Vagina (tissue), 2 donors: ENCODE measurements at regions of chr9 and their contacts with region 1.

Region 1: GRCh38 chr9:129482521-129483414 is 138.1 kb downstream of the C9orf50 start:
- DNase-seq: no peak
- H3K4me3 ChIP-seq: peak overlapping the region; percentile 54 to 75
- H3K27ac ChIP-seq: peak overlapping the region; percentile 99
- H3K4me1 ChIP-seq: peaks cover 90% of the 10 kb centered on the region
- H3K27me3 ChIP-seq: no peaks in the 10 kb centered on the region
- CTCF ChIP-seq: no peak
- POLR2A ChIP-seq: peak in 1 of 2 donors; percentile 16

Region 2: DNA sequence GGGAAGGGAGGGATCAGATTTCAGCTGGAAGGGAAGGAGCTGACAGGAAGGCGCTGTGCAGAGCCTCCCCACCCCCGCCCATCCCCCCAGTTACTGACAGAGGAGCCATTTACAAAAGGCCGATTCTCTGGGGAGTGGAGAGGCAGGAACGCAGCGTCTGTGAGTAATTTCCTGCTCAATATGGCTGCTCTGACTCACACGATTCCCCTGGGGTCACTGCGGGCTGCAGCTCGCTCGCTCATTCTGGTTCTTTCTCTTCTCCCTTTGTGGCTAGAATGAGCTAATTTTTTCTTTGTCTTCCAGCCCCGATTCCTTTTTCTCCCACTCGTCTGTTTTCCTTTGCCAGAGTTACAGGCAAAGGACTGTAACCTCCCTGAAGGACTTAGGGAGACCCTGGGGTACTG is 342.8 kb before region 1 on chr9:
- intact Hi-C with region 1: loop called (anchors 2 kb)
- DNase-seq: peak; percentile 96 to 99
- H3K4me3 ChIP-seq: peak overlapping the region; percentile 47 to 53
- H3K27ac ChIP-seq: peak overlapping the region; percentile 100
- H3K4me1 ChIP-seq: peaks cover 78% of the 10 kb centered on the region
- H3K27me3 ChIP-seq: no peaks in the 10 kb centered on the region
- CTCF ChIP-seq: no peak
- POLR2A ChIP-seq: peak in 1 of 2 donors; percentile 35

Region 3: GRCh38 chr9:129177791-129178559 is 304.8 kb before region 1 on chr9 and contains the start of gene IER5L:
- intact Hi-C with region 1: loop called (anchors 5 kb)
- DNase-seq: peak in 1 of 2 donors; percentile 97
- H3K4me3 ChIP-seq: peak within 1 kb of the TSS; percentile 77 to 99
- H3K27ac ChIP-seq: peak within 1 kb of the TSS; percentile 99
- H3K4me1 ChIP-seq: peaks cover 29% of the 10 kb centered on the region
- H3K27me3 ChIP-seq: no peaks in the 10 kb centered on the region
- CTCF ChIP-seq: no peak
- POLR2A ChIP-seq: peak in 1 of 2 donors; percentile 97
- total RNA-seq, gene IER5L: 34.4 TPM

Region 4: DNA sequence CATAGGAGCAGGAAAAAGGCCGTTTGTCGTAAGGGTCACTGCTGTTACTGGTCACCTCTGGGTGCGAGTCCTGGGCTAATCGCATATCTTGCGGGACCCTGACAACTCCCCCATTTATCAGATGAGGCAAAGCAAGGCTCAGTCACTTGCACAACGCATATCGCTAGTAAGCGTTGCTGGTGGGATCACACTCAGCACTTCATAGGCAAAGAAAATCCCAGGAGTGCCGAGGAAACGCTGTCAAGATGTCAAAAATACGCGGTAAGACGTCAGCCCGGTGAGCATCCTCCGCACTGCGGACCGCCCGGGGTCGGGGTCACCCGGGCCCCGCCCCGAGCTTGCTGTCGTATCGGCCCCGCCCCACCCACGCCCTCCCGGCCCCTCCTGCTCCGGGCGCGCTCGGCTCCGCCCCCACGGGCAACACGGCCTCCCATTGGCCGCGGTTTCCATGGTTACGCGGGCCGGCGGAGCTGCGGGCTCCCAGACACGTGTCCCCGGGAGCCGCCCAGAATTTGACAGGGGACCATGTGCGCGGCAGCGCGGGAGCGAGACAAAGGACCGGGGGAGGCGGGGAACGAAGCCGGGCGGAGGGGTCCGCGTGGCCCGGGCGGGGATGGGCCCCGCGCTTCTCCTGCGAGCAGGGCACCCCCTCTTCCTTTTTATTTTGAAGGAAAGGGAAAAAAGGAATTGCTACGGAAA is 224.5 kb before region 1 on chr9:
- intact Hi-C with region 1: loop called (anchors 5 kb)
- DNase-seq: no peak
- H3K4me3 ChIP-seq: peak overlapping the region; percentile 29 to 48
- H3K27ac ChIP-seq: peak overlapping the region; percentile 67
- H3K4me1 ChIP-seq: peaks cover 30% of the 10 kb centered on the region
- H3K27me3 ChIP-seq: no peaks in the 10 kb centered on the region
- CTCF ChIP-seq: no peak
- POLR2A ChIP-seq: no peak

Region 5: DNA sequence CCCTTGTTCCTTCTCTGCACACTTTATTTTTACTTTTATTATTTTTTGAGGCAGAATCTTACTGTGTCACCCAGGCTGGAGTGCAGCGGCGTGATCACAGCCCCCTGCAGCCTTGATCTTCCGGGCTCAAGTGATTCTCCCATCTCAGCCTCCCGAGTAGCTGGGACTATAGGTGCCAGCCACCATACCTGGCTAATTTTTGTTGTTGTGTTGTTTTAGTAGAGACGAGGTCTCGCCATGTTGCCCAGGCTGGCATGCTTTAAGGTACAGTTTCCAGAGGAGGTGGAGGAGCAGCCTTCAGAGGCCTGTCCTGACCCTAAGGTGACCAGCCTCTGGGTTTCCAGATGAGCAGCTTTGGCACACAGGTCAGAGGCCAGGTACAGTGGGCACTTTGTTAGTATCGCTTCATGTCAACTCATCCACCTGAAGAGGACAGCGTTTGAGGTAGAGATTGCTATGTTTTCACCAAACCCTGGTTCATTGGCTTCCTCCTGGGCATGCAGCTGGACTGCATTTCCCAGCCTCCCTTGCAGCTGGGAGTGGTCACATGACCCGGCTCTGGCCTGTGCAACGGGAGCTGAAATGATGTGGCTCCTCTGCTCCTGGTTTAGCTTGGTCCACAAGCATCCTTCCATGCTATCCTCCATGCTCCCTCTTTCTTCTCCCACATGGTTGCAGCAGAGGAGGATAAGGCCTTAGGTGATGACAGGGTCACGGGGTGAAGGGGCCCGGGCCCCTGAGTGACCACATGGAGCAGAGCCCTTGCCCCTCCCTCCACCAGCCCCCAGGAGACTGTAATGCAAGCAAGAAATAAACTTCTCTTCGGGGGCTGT is 165.4 kb before region 1 on chr9:
- intact Hi-C with region 1: loop called (anchors 5 kb)
- DNase-seq: peak in 1 of 2 donors; percentile 85
- H3K4me3 ChIP-seq: no peak overlapping the region
- H3K27ac ChIP-seq: peak overlapping the region; percentile 96
- H3K4me1 ChIP-seq: peaks cover 73% of the 10 kb centered on the region
- H3K27me3 ChIP-seq: no peaks in the 10 kb centered on the region
- CTCF ChIP-seq: no peak
- POLR2A ChIP-seq: no peak

Region 6: DNA sequence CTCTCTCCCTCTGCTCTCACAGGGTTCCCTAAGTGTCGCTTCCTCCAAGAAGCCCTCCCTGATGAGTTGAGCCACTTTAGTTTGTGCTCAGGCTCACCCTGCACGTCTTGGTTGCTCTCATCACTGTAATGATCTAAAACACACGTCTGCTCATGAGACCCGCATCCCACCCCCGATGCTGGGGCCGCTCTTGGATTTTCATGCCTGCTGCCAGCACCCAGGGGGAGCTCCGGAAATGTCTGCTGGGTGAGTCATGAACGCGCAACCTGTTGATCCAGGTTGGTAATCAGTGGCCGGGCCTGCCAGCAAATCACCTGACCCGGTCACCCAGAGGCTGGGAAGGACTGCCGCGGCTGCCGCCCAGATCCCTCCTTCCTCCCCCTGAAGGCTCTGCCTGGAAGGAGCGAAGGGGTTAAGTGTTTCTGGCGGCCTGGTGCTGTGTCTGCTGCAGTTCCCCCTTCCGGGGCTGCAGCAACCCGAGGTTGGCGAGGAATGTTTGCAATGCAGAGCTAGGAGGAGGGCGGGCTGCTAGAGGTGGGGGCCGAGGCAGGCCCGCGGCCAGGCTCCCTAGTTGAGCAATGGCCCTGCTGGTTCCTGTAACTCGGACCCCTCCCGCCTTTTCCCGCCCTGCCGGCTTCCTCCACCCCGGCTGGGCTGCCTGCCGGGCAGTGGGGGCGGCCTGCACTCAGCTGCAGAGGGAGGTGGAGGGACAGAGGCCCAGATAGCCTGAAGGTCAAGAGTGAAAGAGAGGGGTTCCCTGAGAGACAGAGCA is 148.6 kb before region 1 on chr9:
- intact Hi-C with region 1: loop called (anchors 5 kb)
- DNase-seq: peak in 1 of 2 donors; percentile 97
- H3K4me3 ChIP-seq: peak overlapping the region; percentile 23 to 31
- H3K27ac ChIP-seq: peak overlapping the region; percentile 92
- H3K4me1 ChIP-seq: peaks cover 70% of the 10 kb centered on the region
- H3K27me3 ChIP-seq: no peaks in the 10 kb centered on the region
- CTCF ChIP-seq: no peak
- POLR2A ChIP-seq: no peak

Region 7: GRCh38 chr9:129413537-129414376 is 69.0 kb before region 1 on chr9:
- intact Hi-C with region 1: loop called (anchors 5 kb)
- DNase-seq: peak in 1 of 2 donors; percentile 96
- H3K4me3 ChIP-seq: peak overlapping the region; percentile 52 to 65
- H3K27ac ChIP-seq: peak overlapping the region; percentile 98
- H3K4me1 ChIP-seq: peaks cover 45% of the 10 kb centered on the region
- H3K27me3 ChIP-seq: no peaks in the 10 kb centered on the region
- CTCF ChIP-seq: no peak
- POLR2A ChIP-seq: peak in 1 of 2 donors; percentile 97

Region 8: DNA sequence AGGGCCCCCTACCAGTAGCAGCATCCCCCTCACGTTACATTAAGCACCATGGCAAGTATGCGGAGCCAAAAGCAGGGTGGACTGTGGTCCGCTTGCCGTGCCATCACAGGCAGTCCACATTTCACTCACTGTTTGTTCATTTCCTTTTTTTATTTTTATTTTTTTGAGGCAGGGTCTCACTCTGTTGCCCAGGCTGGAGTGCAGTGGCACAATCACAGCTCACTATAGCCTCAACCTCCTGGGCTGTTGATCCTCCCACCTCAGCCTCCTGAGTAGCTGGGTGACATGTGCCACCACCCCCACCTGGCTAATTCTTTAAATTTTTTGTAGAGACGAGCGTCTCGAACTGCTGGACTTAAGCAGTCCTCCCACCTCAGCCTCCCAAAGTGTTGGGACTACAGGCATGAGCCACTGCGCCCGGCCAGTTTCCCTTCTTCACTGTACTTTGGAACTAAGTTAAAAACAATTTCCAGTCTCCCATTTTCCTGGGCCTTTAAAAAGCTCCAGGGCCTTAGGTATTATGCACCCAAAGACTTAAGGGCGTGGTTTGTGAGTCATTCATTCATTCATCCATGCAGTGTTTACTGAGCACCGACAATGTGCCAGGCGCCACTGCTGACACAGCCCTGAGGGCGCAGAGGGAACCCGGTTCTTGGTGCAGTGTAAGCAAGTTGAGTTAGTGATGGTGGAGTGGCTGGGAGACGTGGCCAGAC is 202.6 kb after region 1 on chr9:
- intact Hi-C with region 1: no loop called
- DNase-seq: no peak
- H3K4me3 ChIP-seq: no peak overlapping the region
- H3K27ac ChIP-seq: no peak overlapping the region
- H3K4me1 ChIP-seq: peaks cover 45% of the 10 kb centered on the region
- H3K27me3 ChIP-seq: no peaks in the 10 kb centered on the region
- CTCF ChIP-seq: no peak
- POLR2A ChIP-seq: no peak